Naive thymus-derived CD4-positive, alpha-beta T cell (primary cell): ENCODE measurements at regions of chr3 and their contacts with region 1.

Region 1: GRCh38 chr3:186570096-186570940 is at the start of gene DNAJB11:
- DNase-seq: peak; percentile 83 to 100 (median 99)
- ATAC-seq: peak; percentile 91
- H3K4me3 ChIP-seq: peak within 1 kb of the TSS; percentile 85
- H3K4me3 Mint-ChIP-seq: peak within 1 kb of the TSS; percentile 83 to 98 (median 95)
- H3K27ac ChIP-seq: peak within 1 kb of the TSS; percentile 95
- H3K27ac Mint-ChIP-seq: peak within 1 kb of the TSS; percentile 85 to 99 (median 98)
- H3K4me1 ChIP-seq: peaks cover 25 to 33% of the 10 kb centered on the region in 2 donors
- H3K4me1 Mint-ChIP-seq: peaks cover 20 to 70% (median 66%) of the 10 kb centered on the region in 7 donors
- H3K27me3 ChIP-seq: no peaks in the 10 kb centered on the region
- H3K27me3 Mint-ChIP-seq: peaks cover 0 to 4% (median 0%) of the 10 kb centered on the region in 5 donors
- total RNA-seq, gene DNAJB11: 29.9 to 75.2 (median 63.1) TPM

Region 2: GRCh38 chr3:185282696-185283394 is 1287.5 kb before region 1 on chr3:
- CTCF ChIA-PET with region 1: no interaction called
- POLR2A ChIA-PET with region 1: no interaction called
- intact Hi-C with region 1: loop called (anchors 5 kb)
- DNase-seq: peak; percentile 80 to 95 (median 89)
- ATAC-seq: peak; percentile 99
- H3K4me3 ChIP-seq: peak overlapping the region; percentile 91
- H3K4me3 Mint-ChIP-seq: peak overlapping the region; percentile 89 to 100 (median 94)
- H3K27ac ChIP-seq: peak overlapping the region; percentile 59
- H3K27ac Mint-ChIP-seq: peak overlapping the region; percentile 77 to 98 (median 93)
- H3K4me1 ChIP-seq: peaks cover 5 to 12% of the 10 kb centered on the region in 2 donors
- H3K4me1 Mint-ChIP-seq: peaks cover 15 to 33% (median 19%) of the 10 kb centered on the region in 7 donors
- H3K27me3 ChIP-seq: no peaks in the 10 kb centered on the region
- H3K27me3 Mint-ChIP-seq: peaks cover 9 to 25% (median 21%) of the 10 kb centered on the region in 5 donors

Region 3: GRCh38 chr3:185585859-185586685 is 984.2 kb before region 1 on chr3 and contains the start of gene SENP2:
- CTCF ChIA-PET with region 1: no interaction called
- POLR2A ChIA-PET with region 1: interaction called, 4 read pairs
- intact Hi-C with region 1: loop called (anchors 1 kb)
- DNase-seq: peak; percentile 96 to 100 (median 100)
- ATAC-seq: peak; percentile 94
- H3K4me3 ChIP-seq: peak within 1 kb of the TSS; percentile 95
- H3K4me3 Mint-ChIP-seq: peak within 1 kb of the TSS; percentile 79 to 94 (median 87)
- H3K27ac ChIP-seq: peak within 1 kb of the TSS; percentile 95
- H3K27ac Mint-ChIP-seq: peak within 1 kb of the TSS; percentile 86 to 99 (median 95)
- H3K4me1 ChIP-seq: peaks cover 21 to 27% of the 10 kb centered on the region in 2 donors
- H3K4me1 Mint-ChIP-seq: peaks cover 24 to 40% (median 31%) of the 10 kb centered on the region in 7 donors
- H3K27me3 ChIP-seq: no peaks in the 10 kb centered on the region
- H3K27me3 Mint-ChIP-seq: peaks cover 0 to 5% (median 0%) of the 10 kb centered on the region in 5 donors
- total RNA-seq, gene SENP2: 30.0 to 59.2 (median 47.3) TPM

Region 4: DNA sequence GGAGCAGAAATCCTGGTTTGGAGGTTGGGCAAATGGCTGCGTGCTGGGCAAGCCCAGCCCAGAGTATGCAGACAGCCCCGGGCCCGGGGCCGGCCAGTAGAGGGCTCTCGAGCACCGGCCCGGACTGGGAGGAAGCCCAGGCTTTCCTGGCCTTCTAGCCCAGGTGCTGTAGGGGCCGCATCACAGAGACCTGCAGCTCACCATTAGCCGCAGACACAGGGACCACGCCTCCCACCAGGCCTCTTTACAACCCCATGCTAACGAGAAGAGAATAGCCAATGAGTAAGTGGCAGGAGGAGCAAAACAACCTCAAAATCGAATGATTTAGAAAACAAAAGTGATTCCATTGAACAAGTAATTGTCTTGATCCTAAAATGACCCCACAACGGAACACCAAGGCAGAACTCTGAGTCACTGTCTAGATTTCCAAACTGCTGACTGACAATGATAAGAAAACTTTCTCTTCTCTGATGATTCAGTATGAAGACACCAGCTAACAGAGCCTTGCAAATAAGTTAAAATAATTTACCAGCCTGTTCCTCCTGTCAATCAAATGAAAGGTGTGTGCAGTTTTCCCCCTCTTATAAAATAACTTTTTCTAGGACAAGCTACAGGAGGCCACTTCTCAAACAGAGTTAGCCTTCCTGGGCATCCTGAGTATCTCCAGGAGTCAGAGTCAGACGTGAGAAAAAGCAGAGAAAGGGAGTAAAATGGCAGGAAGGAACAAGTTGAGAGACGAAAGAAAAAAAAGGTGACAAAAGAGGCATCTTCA is 310.5 kb before region 1 on chr3:
- CTCF ChIA-PET with region 1: no interaction called
- POLR2A ChIA-PET with region 1: no interaction called
- intact Hi-C with region 1: loop called (anchors 1 kb)
- DNase-seq: peak; percentile 17 to 65 (median 43)
- ATAC-seq: peak; percentile 92
- H3K4me3 ChIP-seq: no peak overlapping the region
- H3K4me3 Mint-ChIP-seq: peak overlapping the region in 3 of 10 donors; percentile 23 to 41 (median 35)
- H3K27ac ChIP-seq: no peak overlapping the region
- H3K27ac Mint-ChIP-seq: peak overlapping the region in 8 of 9 donors; percentile 12 to 73 (median 32)
- H3K4me1 ChIP-seq: peaks cover 0 to 3% of the 10 kb centered on the region in 2 donors
- H3K4me1 Mint-ChIP-seq: peaks cover 13 to 23% (median 20%) of the 10 kb centered on the region in 7 donors
- H3K27me3 ChIP-seq: no peaks in the 10 kb centered on the region
- H3K27me3 Mint-ChIP-seq: no peaks in the 10 kb centered on the region

Region 5: GRCh38 chr3:186826976-186827731 is 256.8 kb after region 1 on chr3:
- CTCF ChIA-PET with region 1: no interaction called
- POLR2A ChIA-PET with region 1: no interaction called
- intact Hi-C with region 1: loop called in 1 of 2 experiments (anchors 2 kb)
- DNase-seq: peak; percentile 79 to 92 (median 87)
- ATAC-seq: peak; percentile 96
- H3K4me3 ChIP-seq: peak overlapping the region; percentile 66
- H3K4me3 Mint-ChIP-seq: peak overlapping the region; percentile 53 to 91 (median 80)
- H3K27ac ChIP-seq: peak overlapping the region; percentile 52
- H3K27ac Mint-ChIP-seq: peak overlapping the region in 2 of 9 donors; percentile 18 to 19
- H3K4me1 ChIP-seq: peaks cover 6 to 21% of the 10 kb centered on the region in 2 donors
- H3K4me1 Mint-ChIP-seq: peaks cover 15 to 24% (median 20%) of the 10 kb centered on the region in 7 donors
- H3K27me3 ChIP-seq: peaks cover 0 to 22% of the 10 kb centered on the region in 2 donors
- H3K27me3 Mint-ChIP-seq: peaks cover 45 to 61% (median 52%) of the 10 kb centered on the region in 5 donors

Region 6: GRCh38 chr3:187139126-187139894 is 569.0 kb after region 1 on chr3 and contains the start of gene RPL39L:
- CTCF ChIA-PET with region 1: no interaction called
- POLR2A ChIA-PET with region 1: interaction called, 3 read pairs
- intact Hi-C with region 1: loop called (anchors 1 to 5 kb)
- DNase-seq: peak; percentile 87 to 95 (median 92)
- ATAC-seq: peak; percentile 97
- H3K4me3 ChIP-seq: peak within 1 kb of the TSS; percentile 94
- H3K4me3 Mint-ChIP-seq: peak within 1 kb of the TSS; percentile 80 to 94 (median 89)
- H3K27ac ChIP-seq: peak within 1 kb of the TSS; percentile 76
- H3K27ac Mint-ChIP-seq: peak within 1 kb of the TSS; percentile 86 to 98 (median 94)
- H3K4me1 ChIP-seq: peaks cover 9 to 17% of the 10 kb centered on the region in 2 donors
- H3K4me1 Mint-ChIP-seq: peaks cover 6 to 26% (median 17%) of the 10 kb centered on the region in 7 donors
- H3K27me3 ChIP-seq: no peaks in the 10 kb centered on the region
- H3K27me3 Mint-ChIP-seq: peaks cover 0 to 2% (median 0%) of the 10 kb centered on the region in 5 donors
- total RNA-seq, gene RPL39L: 0.81 to 14.0 (median 2.8) TPM in 4 of 5 experiments, not detected in the other